Naive thymus-derived CD4-positive, alpha-beta T cell (primary cell): ENCODE measurements at regions of chr16 and their contacts with region 1.

Region 1: DNA sequence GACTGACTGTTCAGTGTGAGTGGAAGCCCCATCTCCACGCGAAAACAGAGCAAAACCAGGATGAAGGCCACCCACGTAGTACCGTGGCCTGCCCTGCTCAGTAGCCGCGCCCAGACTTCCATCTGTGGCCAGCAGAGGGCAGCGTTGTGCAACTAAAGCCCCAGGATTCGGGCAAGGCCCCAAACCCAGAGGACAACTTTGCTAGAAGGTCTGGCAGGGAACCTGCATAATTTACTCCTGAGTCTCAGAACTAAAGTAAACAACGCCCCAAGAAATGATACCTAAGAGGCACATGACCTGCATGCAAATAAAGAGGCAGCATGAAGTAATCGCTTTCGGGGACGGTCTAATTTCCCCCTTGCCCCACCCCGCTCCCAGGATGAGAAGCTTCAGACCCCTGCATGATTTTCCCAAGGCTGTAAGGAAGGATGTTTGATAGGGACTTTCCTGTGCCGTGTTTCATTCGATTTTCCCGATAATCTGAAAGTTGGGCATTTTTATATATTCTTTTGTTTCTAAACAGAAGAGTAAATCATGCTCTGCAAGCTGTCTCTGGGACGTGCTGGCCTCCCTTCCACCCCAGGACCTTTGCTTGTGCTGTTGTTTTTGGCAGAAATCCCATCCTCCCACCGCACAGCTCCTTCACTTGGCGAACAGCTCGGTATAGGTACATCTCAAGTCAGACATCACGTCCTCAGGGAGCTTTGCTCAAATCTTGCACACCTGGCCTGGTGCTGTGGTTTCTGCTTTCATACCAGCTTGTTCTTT is 18.6 kb downstream of the HSBP1 start:
- DNase-seq: peak; percentile 42 to 82 (median 69)
- ATAC-seq: peak; percentile 96
- H3K4me3 ChIP-seq: no peak overlapping the region
- H3K4me3 Mint-ChIP-seq: peak overlapping the region in 1 of 10 donors; percentile 46
- H3K27ac ChIP-seq: no peak overlapping the region
- H3K27ac Mint-ChIP-seq: peak overlapping the region in 3 of 9 donors; percentile 10 to 72 (median 69)
- H3K4me1 ChIP-seq: no peaks in the 10 kb centered on the region
- H3K4me1 Mint-ChIP-seq: peaks cover 0 to 6% (median 5%) of the 10 kb centered on the region in 7 donors
- H3K27me3 ChIP-seq: no peaks in the 10 kb centered on the region
- H3K27me3 Mint-ChIP-seq: peaks cover 0 to 5% (median 0%) of the 10 kb centered on the region in 5 donors

Region 2: DNA sequence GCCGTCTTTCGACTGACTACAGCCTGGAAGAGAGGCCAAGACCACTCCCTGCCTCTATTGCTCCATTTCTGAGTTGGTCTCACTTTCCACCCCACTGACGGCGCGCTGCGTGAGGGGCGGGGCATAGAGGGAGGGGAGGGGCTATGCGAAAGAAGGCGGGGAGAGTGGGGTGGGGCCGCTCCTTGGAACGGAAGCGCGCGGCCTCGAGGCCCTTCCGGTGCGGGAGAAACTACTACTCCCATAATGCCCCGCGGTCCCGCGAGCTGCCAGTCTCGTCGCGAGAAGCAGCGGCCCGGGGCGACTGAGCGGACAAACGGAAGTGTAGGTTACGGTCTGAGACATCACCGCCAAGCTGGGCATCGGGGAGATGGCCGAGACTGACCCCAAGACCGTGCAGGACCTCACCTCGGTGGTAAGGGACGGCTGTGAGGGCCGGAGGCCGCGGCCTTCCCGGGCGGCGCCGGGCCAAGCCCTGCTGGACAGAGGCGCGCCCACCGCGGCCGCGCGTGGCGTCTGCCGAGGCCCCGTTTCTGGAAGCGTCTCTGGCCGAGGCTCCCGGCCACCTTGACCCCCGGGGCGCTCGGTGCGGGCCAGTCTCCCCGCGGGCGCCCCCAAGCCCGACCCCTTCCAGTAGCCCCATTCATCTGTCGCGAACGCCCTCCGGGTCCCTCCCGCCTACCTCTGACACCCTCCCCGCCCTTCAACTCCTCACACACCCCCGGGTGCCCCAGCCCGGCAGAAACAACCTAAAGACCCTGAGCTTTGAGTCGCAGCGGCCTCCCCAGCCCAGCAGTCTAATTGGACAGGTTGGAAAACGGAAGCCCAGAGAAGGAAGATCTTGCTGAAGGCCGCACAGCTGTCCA is 18.4 kb before region 1 on chr16 and contains the start of gene HSBP1:
- CTCF ChIA-PET with region 1: interaction called, 5 read pairs
- POLR2A ChIA-PET with region 1: no interaction called
- intact Hi-C with region 1: loop called in 1 of 2 experiments (anchors 2 kb)
- DNase-seq: peak; percentile 85 to 93 (median 91)
- ATAC-seq: peak; percentile 100
- H3K4me3 ChIP-seq: peak within 1 kb of the TSS; percentile 90
- H3K4me3 Mint-ChIP-seq: peak within 1 kb of the TSS; percentile 91 to 99 (median 98)
- H3K27ac ChIP-seq: peak within 1 kb of the TSS; percentile 87
- H3K27ac Mint-ChIP-seq: peak within 1 kb of the TSS; percentile 87 to 98 (median 95)
- H3K4me1 ChIP-seq: peaks cover 9 to 21% of the 10 kb centered on the region in 2 donors
- H3K4me1 Mint-ChIP-seq: peaks cover 19 to 55% (median 48%) of the 10 kb centered on the region in 7 donors
- H3K27me3 ChIP-seq: no peaks in the 10 kb centered on the region
- H3K27me3 Mint-ChIP-seq: peaks cover 0 to 5% (median 0%) of the 10 kb centered on the region in 5 donors
- total RNA-seq, gene HSBP1: 20.6 to 78.3 (median 32.3) TPM

Region 3: DNA sequence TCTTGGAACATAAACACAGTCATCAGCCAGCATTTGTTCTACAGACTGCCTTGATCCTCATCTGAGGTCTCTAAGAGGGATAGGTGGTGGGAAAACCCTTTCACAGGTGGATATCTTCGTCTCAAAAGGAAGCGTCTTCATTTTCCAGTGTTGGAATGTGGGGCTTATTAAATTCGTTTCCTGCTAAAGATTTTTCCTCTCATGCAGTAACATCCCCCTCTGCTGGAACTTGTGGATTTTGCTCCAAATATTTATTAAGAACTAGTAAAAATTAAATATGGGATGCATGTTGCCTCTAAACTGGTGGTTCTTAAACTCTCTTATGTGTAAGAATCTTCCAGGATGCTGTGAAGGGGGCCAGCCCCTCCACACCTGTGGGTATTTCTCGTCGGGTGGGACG is 52.5 kb after region 1 on chr16:
- CTCF ChIA-PET with region 1: no interaction called
- POLR2A ChIA-PET with region 1: no interaction called
- intact Hi-C with region 1: loop called (anchors 1 to 5 kb)
- DNase-seq: no peak
- ATAC-seq: no peak
- H3K4me3 ChIP-seq: no peak overlapping the region
- H3K4me3 Mint-ChIP-seq: no peak overlapping the region
- H3K27ac ChIP-seq: no peak overlapping the region
- H3K27ac Mint-ChIP-seq: no peak overlapping the region
- H3K4me1 ChIP-seq: no peaks in the 10 kb centered on the region
- H3K4me1 Mint-ChIP-seq: no peaks in the 10 kb centered on the region
- H3K27me3 ChIP-seq: no peaks in the 10 kb centered on the region
- H3K27me3 Mint-ChIP-seq: peaks cover 15 to 43% (median 26%) of the 10 kb centered on the region in 5 donors

Region 4: DNA sequence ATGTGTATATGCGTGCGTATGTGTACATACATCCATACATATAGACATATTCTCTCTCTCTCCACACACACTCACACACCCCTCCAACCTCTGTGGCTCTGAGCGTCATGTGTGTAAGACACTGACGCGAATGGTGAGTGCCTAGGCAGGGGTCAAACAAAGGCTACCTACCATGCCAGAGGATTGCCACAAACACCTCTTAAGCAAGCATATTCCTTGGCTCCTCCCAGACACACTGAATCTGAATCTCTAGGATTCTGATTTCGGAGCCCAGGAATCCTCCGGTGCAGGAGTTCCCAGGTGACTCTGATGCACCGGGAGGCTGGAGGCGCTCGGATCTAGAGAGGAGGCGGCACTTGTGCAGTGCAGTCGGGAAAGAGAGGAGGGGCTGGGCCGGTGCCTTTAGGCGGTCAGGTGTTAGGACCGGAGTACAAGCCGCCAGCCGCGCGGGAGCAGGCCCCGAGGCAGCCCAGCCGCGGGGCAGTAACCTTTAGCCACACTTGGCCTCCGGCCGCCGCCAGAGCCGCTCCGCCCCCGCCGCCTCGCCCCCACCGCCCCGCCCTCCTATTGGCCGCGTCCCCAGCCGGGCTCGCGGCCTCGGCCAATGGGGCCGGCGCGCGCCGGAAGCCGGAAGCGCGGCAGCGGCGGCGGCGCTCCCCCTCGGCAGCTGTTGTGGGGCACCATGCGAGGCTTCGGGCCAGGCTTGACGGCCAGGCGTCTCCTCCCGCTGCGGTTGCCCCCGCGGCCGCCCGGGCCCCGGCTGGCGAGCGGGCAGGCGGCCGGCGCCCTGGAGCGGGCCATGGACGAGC is 72.3 kb after region 1 on chr16 and contains the start of gene MLYCD:
- CTCF ChIA-PET with region 1: interaction called, 3 read pairs
- POLR2A ChIA-PET with region 1: no interaction called
- intact Hi-C with region 1: loop called (anchors 1 kb)
- DNase-seq: peak; percentile 59 to 82 (median 68)
- ATAC-seq: peak; percentile 96
- H3K4me3 ChIP-seq: peak within 1 kb of the TSS; percentile 61
- H3K4me3 Mint-ChIP-seq: peak within 1 kb of the TSS; percentile 86 to 100 (median 96)
- H3K27ac ChIP-seq: peak within 1 kb of the TSS; percentile 70
- H3K27ac Mint-ChIP-seq: peak within 1 kb of the TSS; percentile 65 to 96 (median 88)
- H3K4me1 ChIP-seq: peaks cover 4 to 17% of the 10 kb centered on the region in 2 donors
- H3K4me1 Mint-ChIP-seq: peaks cover 20 to 50% (median 41%) of the 10 kb centered on the region in 7 donors
- H3K27me3 ChIP-seq: peaks cover 0 to 4% of the 10 kb centered on the region in 2 donors
- H3K27me3 Mint-ChIP-seq: peaks cover 4 to 22% (median 8%) of the 10 kb centered on the region in 5 donors
- total RNA-seq, gene MLYCD: 6.6 to 11.4 (median 8.1) TPM

Region 5: DNA sequence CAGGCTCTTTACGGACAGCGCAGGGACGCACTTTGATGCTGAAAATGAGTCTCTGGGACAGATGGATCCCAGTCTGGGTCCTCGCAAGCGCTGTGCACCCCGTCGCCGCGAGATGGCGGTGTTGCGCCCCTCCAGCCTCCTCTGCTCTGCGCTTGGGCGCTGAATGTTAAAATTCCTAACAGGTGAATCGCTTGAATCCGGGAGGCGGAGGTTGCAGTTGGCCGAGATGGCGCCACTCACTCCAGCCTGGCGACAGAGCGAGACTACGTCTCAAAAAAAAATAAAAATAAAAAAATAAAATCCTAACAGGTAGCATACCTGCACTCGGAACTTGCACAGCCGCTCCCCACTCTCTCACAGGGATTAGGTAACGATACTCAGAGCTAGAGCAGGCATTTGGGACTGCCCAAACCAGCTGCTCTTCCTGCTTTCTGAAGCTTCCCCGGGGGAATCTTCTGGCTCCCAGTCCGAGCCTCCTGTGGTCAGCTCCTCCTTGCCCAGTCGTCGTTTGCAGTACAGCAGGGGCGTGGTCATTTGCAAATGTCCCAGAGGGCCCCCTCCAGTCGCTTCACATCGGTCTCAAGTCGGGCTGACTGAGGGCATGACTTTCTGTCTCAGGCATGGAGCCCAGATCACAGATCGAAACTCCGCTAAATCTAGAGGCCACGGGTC is 100.5 kb after region 1 on chr16:
- CTCF ChIA-PET with region 1: no interaction called
- POLR2A ChIA-PET with region 1: no interaction called
- intact Hi-C with region 1: loop called in 1 of 2 experiments (anchors 1 kb)
- DNase-seq: peak in 7 of 9 donors; percentile 25 to 71 (median 49)
- ATAC-seq: peak; percentile 79
- H3K4me3 ChIP-seq: no peak overlapping the region
- H3K4me3 Mint-ChIP-seq: no peak overlapping the region
- H3K27ac ChIP-seq: no peak overlapping the region
- H3K27ac Mint-ChIP-seq: no peak overlapping the region
- H3K4me1 ChIP-seq: no peaks in the 10 kb centered on the region
- H3K4me1 Mint-ChIP-seq: peaks cover 0 to 5% (median 4%) of the 10 kb centered on the region in 7 donors
- H3K27me3 ChIP-seq: no peaks in the 10 kb centered on the region
- H3K27me3 Mint-ChIP-seq: no peaks in the 10 kb centered on the region

Region 6: DNA sequence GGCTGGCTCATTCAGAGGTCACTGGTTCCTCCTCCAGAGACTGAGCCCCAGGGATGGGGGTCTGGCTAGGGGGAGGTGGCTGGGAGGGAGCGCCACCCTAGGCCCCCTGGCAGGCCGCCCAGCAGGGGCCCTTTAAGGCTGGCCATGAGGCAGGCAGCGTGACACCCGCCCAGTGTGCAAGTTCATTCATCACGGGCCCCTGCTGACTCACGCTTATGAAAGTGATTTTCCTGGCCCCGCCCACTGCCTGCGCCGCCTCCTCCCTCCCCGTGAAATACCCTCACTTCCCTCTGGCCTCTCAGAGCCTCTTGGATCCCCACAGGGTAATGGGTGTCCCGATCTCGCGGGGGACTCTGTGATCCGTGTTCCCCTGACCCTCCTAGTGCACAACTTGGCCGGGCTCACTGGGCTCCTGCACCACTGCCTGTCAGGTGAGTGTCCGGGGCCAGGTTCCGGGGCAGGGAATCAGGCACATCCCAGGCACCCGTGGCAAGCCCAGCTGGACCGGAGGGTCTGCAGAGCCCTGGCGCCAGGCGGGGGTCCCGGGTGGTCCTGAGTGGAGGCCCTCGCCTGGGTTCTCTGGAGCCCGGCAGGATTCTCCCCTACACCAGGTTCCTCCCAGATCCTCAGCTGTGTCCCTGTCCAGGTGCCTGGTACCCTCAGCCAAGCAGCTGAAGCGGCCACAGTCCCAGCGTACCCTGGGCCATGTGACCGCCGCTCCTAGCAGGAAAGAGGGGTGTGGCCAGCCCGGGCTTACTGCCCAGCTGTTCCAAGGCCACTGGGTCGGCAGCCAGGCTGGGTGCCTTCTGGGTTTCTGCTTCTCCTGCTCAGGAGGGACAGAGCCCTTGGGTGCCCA is 126.8 kb after region 1 on chr16 and contains the start of gene OSGIN1:
- CTCF ChIA-PET with region 1: no interaction called
- POLR2A ChIA-PET with region 1: no interaction called
- intact Hi-C with region 1: loop called (anchors 2 to 5 kb)
- DNase-seq: peak in 4 of 9 donors; percentile 14 to 81 (median 28)
- ATAC-seq: peak; percentile 84
- H3K4me3 ChIP-seq: no peak within 1 kb of the TSS
- H3K4me3 Mint-ChIP-seq: peak within 1 kb of the TSS in 9 of 10 donors; percentile 48 to 86 (median 66)
- H3K27ac ChIP-seq: no peak within 1 kb of the TSS
- H3K27ac Mint-ChIP-seq: peak within 1 kb of the TSS in 1 of 9 donors; percentile 63
- H3K4me1 ChIP-seq: peaks cover 0 to 14% of the 10 kb centered on the region in 2 donors
- H3K4me1 Mint-ChIP-seq: peaks cover 0 to 12% (median 9%) of the 10 kb centered on the region in 7 donors
- H3K27me3 ChIP-seq: peaks cover 0 to 6% of the 10 kb centered on the region in 2 donors
- H3K27me3 Mint-ChIP-seq: peaks cover 7 to 36% (median 17%) of the 10 kb centered on the region in 5 donors
- total RNA-seq, gene OSGIN1: 0.34 to 8.4 (median 1.3) TPM

Region 7: GRCh38 chr16:84062734-84063640 is 236.7 kb after region 1 on chr16:
- CTCF ChIA-PET with region 1: no interaction called
- POLR2A ChIA-PET with region 1: no interaction called
- intact Hi-C with region 1: loop called (anchors 1 kb)
- DNase-seq: peak; percentile 28 to 78 (median 51)
- ATAC-seq: peak; percentile 92
- H3K4me3 ChIP-seq: no peak overlapping the region
- H3K4me3 Mint-ChIP-seq: no peak overlapping the region
- H3K27ac ChIP-seq: no peak overlapping the region
- H3K27ac Mint-ChIP-seq: peak overlapping the region in 6 of 9 donors; percentile 21 to 83 (median 35)
- H3K4me1 ChIP-seq: no peaks in the 10 kb centered on the region
- H3K4me1 Mint-ChIP-seq: peaks cover 0 to 8% (median 0%) of the 10 kb centered on the region in 7 donors
- H3K27me3 ChIP-seq: no peaks in the 10 kb centered on the region
- H3K27me3 Mint-ChIP-seq: no peaks in the 10 kb centered on the region